H1 (cell line): ENCODE measurements at regions of chr3 and their contacts with region 1.

Region 1: GRCh38 chr3:194952841-194953241 is 267.2 kb downstream of the FAM43A start:
- DNase-seq: no peak
- H3K4me3 ChIP-seq: no peak overlapping the region
- H3K27ac ChIP-seq: no peak overlapping the region
- H3K4me1 ChIP-seq: peaks cover 0 to 3% (median 0%) of the 10 kb centered on the region in 4 experiments; a peak in 1 of 7 replicates
- H3K27me3 ChIP-seq: no peaks in the 10 kb centered on the region; a peak in 1 of 7 replicates
- CTCF ChIP-seq: no peak
- EP300 ChIP-seq: no peak
- POLR2A ChIP-seq: no peak
- RAD21 ChIP-seq: no peak

Region 2: DNA sequence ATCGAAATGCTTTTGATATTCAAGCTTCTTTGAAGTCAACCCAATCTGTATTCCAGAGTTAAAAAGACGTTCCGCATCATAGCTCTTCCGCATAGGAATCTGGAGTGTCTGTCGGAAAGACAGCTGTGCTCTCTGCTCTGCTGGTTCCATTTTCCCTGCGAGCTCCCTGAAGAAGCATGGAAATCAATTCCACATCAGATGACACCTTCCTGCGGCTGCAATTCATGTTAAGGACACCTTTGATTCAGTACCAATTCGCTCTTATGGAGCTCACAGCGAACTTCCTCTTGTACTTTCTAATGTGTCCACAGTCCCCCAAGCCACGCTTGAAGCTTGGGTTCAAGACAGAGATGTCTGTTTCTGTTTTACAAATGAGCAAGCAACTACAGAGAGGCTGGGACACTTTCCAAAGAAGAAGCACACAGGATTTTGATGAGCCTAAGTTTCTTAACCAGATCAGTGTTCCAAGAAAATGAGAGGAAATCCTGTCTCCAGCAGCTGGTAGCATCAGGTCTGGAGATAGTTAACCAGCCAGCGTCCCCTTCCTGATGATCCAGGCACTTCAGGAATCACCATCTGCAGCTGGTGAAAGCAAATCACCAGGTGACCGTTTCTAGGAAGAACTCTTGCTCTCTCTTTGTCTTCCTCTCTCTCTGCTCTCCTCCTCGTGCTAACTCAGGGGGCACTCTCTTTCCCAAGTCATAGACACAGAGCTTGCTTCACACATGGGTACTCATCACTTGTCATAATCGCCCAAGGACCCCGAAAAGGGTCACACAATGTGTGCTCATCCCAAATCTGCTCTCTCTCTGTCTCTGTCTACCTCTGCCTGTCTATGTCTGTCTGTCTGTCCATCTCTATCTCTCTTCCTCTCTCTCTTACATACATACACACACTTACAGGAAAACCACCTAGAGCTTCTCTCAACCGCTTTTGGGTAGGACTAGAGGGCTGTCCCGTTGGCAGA is 14.6 kb after region 1 on chr3:
- CTCF ChIA-PET with region 1: interaction called, 13 read pairs
- POLR2A ChIA-PET with region 1: no interaction called
- DNase-seq: peak in 1 of 2 experiments; percentile 28
- H3K4me3 ChIP-seq: no peak overlapping the region
- H3K27ac ChIP-seq: no peak overlapping the region
- H3K4me1 ChIP-seq: no peaks in the 10 kb centered on the region
- H3K27me3 ChIP-seq: no peaks in the 10 kb centered on the region
- CTCF ChIP-seq: peak in 1 of 3 experiments; percentile 4; a peak in 2 of 4 replicates
- EP300 ChIP-seq: no peak
- POLR2A ChIP-seq: no peak
- RAD21 ChIP-seq: peak in 1 of 2 experiments; percentile 18; a peak in 1 of 4 replicates

Region 3: DNA sequence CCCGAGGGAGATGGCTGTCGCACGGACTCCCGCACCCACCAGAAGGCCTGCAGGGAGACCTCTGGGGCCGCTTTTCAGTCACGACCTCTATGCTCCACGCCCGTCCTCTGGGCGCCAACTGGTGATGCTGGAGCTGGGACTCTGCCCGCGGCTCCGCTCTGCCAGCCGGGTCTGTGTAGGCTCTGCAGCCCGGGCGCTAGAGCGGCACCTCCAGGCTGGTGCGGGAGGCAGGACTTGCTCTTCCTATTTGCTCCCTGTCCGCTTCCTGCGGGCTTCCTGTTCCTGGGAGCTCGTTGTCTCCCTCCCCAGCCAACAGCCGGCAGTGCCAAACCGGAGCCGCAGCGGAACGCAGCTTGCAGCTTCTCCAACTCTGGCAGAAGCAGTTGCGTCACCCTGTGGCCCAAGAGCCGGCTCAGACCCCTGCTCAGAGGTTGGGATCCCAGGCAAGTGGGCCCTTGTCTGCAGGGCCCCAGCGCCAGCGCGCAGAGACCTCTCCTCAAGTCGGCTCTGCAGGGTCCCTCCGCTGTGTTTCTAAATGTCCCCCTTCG is 32.3 kb after region 1 on chr3:
- CTCF ChIA-PET with region 1: interaction called, 10 read pairs
- POLR2A ChIA-PET with region 1: no interaction called
- DNase-seq: peak; percentile 75 to 82
- H3K4me3 ChIP-seq: peak overlapping the region in 3 of 4 experiments; percentile 11 to 40 (median 23); a peak in 5 of 8 replicates
- H3K27ac ChIP-seq: no peak overlapping the region
- H3K4me1 ChIP-seq: peaks cover 0 to 7% (median 5%) of the 10 kb centered on the region in 4 experiments; a peak in 3 of 7 replicates
- H3K27me3 ChIP-seq: peaks cover 0 to 7% (median 2%) of the 10 kb centered on the region in 4 experiments; a peak in 2 of 7 replicates
- CTCF ChIP-seq: peak; percentile 52 to 88 (median 75)
- EP300 ChIP-seq: no peak
- POLR2A ChIP-seq: 0 out of 3 replicates have a peak, but pooled peaks of 1 of the 2 experiments have one; percentile 30
- RAD21 ChIP-seq: peak; percentile 65 to 70